ENCODE measurements at regions of chrX and their contacts with region 1.

Region 1: GRCh38 chrX:115650916-115651315 is 89.9 kb downstream of the PLS3 start:
- DNase-seq: no peak
- H3K4me3 Mint-ChIP-seq: no peak overlapping the region
- H3K27ac Mint-ChIP-seq: no peak overlapping the region
- H3K4me1 Mint-ChIP-seq: no peaks in the 10 kb centered on the region
- H3K27me3 Mint-ChIP-seq: no peaks in the 10 kb centered on the region

Region 2: GRCh38 chrX:115630204-115630603 is 20.7 kb before region 1 on chrX:
- intact Hi-C with region 1: no loop called
- DNase-seq: no peak
- H3K4me3 Mint-ChIP-seq: no peak overlapping the region
- H3K27ac Mint-ChIP-seq: no peak overlapping the region
- H3K4me1 Mint-ChIP-seq: no peaks in the 10 kb centered on the region
- H3K27me3 Mint-ChIP-seq: no peaks in the 10 kb centered on the region

Region 3: GRCh38 chrX:115690511-115691216 is 39.7 kb after region 1 on chrX:
- intact Hi-C with region 1: loop called (anchors 2 kb)
- DNase-seq: no peak
- H3K4me3 Mint-ChIP-seq: no peak overlapping the region
- H3K27ac Mint-ChIP-seq: no peak overlapping the region
- H3K4me1 Mint-ChIP-seq: no peaks in the 10 kb centered on the region
- H3K27me3 Mint-ChIP-seq: no peaks in the 10 kb centered on the region

Measured in activated T-helper 2 cell treated with anti-CD3 and anti-CD28 coated beads, Interferon-gamma antibody, Interleukin-2, Interleukin-4, amounts not matched to agents 10 μg/mL and 5 μg/mL and 100 μg/mL, durations not matched to agents 14 hours and 24 hours and 36 hours (primary cell).